ENCODE measurements at regions of chr18 and their contacts with region 1.

Region 1: GRCh38 chr18:63155169-63155852 is 164.3 kb downstream of the BCL2 start:
- DNase-seq: peak; percentile 79 to 92 (median 83)
- H3K4me3 ChIP-seq: peak overlapping the region; percentile 61 to 66
- H3K4me3 Mint-ChIP-seq: peak overlapping the region; percentile 83 to 93 (median 90)
- H3K27ac ChIP-seq: peak overlapping the region; percentile 97
- H3K27ac Mint-ChIP-seq: peak overlapping the region; percentile 93 to 100 (median 99)
- H3K4me1 ChIP-seq: peaks cover 100% of the 10 kb centered on the region
- H3K4me1 Mint-ChIP-seq: peaks cover 83 to 100% (median 93%) of the 10 kb centered on the region in 4 donors
- H3K27me3 ChIP-seq: no peaks in the 10 kb centered on the region
- H3K27me3 Mint-ChIP-seq: no peaks in the 10 kb centered on the region

Region 2: GRCh38 chr18:62522504-62523254 is 632.6 kb before region 1 on chr18 and contains the start of gene ZCCHC2:
- CTCF ChIA-PET with region 1: no interaction called
- POLR2A ChIA-PET with region 1: interaction called, 3 read pairs
- intact Hi-C with region 1: loop called (anchors 10 kb)
- DNase-seq: peak; percentile 97 to 100 (median 98)
- H3K4me3 ChIP-seq: peak within 1 kb of the TSS; percentile 38 to 98
- H3K4me3 Mint-ChIP-seq: peak within 1 kb of the TSS; percentile 90 to 99 (median 96)
- H3K27ac ChIP-seq: peak within 1 kb of the TSS; percentile 93
- H3K27ac Mint-ChIP-seq: peak within 1 kb of the TSS; percentile 80 to 96 (median 87)
- H3K4me1 ChIP-seq: peaks cover 34% of the 10 kb centered on the region
- H3K4me1 Mint-ChIP-seq: peaks cover 21 to 45% (median 32%) of the 10 kb centered on the region in 4 donors
- H3K27me3 ChIP-seq: no peaks in the 10 kb centered on the region
- H3K27me3 Mint-ChIP-seq: no peaks in the 10 kb centered on the region
- total RNA-seq, gene ZCCHC2: 51.7 to 52.2 TPM

Region 3: GRCh38 chr18:63138436-63139340 is 16.6 kb before region 1 on chr18:
- CTCF ChIA-PET with region 1: interaction called, 148 read pairs
- POLR2A ChIA-PET with region 1: interaction called, 54 read pairs
- intact Hi-C with region 1: loop called (anchors 1 kb)
- DNase-seq: no peak
- H3K4me3 ChIP-seq: peak overlapping the region; percentile 23 to 53
- H3K4me3 Mint-ChIP-seq: peak overlapping the region; percentile 82 to 92 (median 88)
- H3K27ac ChIP-seq: peak overlapping the region; percentile 32
- H3K27ac Mint-ChIP-seq: peak overlapping the region; percentile 76 to 96 (median 94)
- H3K4me1 ChIP-seq: peaks cover 70% of the 10 kb centered on the region
- H3K4me1 Mint-ChIP-seq: peaks cover 57 to 90% (median 73%) of the 10 kb centered on the region in 4 donors
- H3K27me3 ChIP-seq: no peaks in the 10 kb centered on the region
- H3K27me3 Mint-ChIP-seq: no peaks in the 10 kb centered on the region

Region 4: GRCh38 chr18:63199743-63200241 is 44.5 kb after region 1 on chr18:
- CTCF ChIA-PET with region 1: interaction called, 17 read pairs
- POLR2A ChIA-PET with region 1: interaction called, 25 read pairs
- intact Hi-C with region 1: loop called (anchors 1 kb)
- DNase-seq: peak; percentile 66 to 76 (median 71)
- H3K4me3 ChIP-seq: peak overlapping the region; percentile 64 to 65
- H3K4me3 Mint-ChIP-seq: no peak overlapping the region
- H3K27ac ChIP-seq: peak overlapping the region; percentile 59
- H3K27ac Mint-ChIP-seq: no peak overlapping the region
- H3K4me1 ChIP-seq: peaks cover 85% of the 10 kb centered on the region
- H3K4me1 Mint-ChIP-seq: peaks cover 28 to 37% (median 31%) of the 10 kb centered on the region in 4 donors
- H3K27me3 ChIP-seq: no peaks in the 10 kb centered on the region
- H3K27me3 Mint-ChIP-seq: no peaks in the 10 kb centered on the region

Region 5: GRCh38 chr18:63216516-63217311 is 61.4 kb after region 1 on chr18:
- CTCF ChIA-PET with region 1: interaction called, 16 read pairs
- POLR2A ChIA-PET with region 1: interaction called, 21 read pairs
- intact Hi-C with region 1: no loop called
- DNase-seq: peak; percentile 38 to 60 (median 50)
- H3K4me3 ChIP-seq: peak overlapping the region in 1 of 2 donors; percentile 21
- H3K4me3 Mint-ChIP-seq: peak overlapping the region; percentile 67 to 84 (median 78)
- H3K27ac ChIP-seq: peak overlapping the region; percentile 55
- H3K27ac Mint-ChIP-seq: peak overlapping the region; percentile 87 to 97 (median 91)
- H3K4me1 ChIP-seq: peaks cover 88% of the 10 kb centered on the region
- H3K4me1 Mint-ChIP-seq: peaks cover 71 to 100% (median 89%) of the 10 kb centered on the region in 4 donors
- H3K27me3 ChIP-seq: no peaks in the 10 kb centered on the region
- H3K27me3 Mint-ChIP-seq: no peaks in the 10 kb centered on the region

Region 6: GRCh38 chr18:63292831-63293683 is 137.7 kb after region 1 on chr18:
- CTCF ChIA-PET with region 1: interaction called, 23 read pairs
- POLR2A ChIA-PET with region 1: interaction called, 33 read pairs
- intact Hi-C with region 1: loop called (anchors 1 kb)
- DNase-seq: peak in 1 of 5 donors; percentile 59
- H3K4me3 ChIP-seq: peak overlapping the region in 1 of 2 donors; percentile 20
- H3K4me3 Mint-ChIP-seq: peak overlapping the region in 5 of 8 donors; percentile 28 to 86 (median 76)
- H3K27ac ChIP-seq: peak overlapping the region; percentile 27
- H3K27ac Mint-ChIP-seq: peak overlapping the region in 6 of 7 donors; percentile 65 to 90 (median 84)
- H3K4me1 ChIP-seq: peaks cover 82% of the 10 kb centered on the region
- H3K4me1 Mint-ChIP-seq: peaks cover 11 to 56% (median 40%) of the 10 kb centered on the region in 4 donors
- H3K27me3 ChIP-seq: no peaks in the 10 kb centered on the region
- H3K27me3 Mint-ChIP-seq: no peaks in the 10 kb centered on the region

Region 7: GRCh38 chr18:63311118-63312018 is 156.1 kb after region 1 on chr18:
- CTCF ChIA-PET with region 1: interaction called, 25 read pairs
- POLR2A ChIA-PET with region 1: interaction called, 195 read pairs
- intact Hi-C with region 1: no loop called
- DNase-seq: no peak
- H3K4me3 ChIP-seq: no peak overlapping the region
- H3K4me3 Mint-ChIP-seq: peak overlapping the region in 7 of 8 donors; percentile 26 to 92 (median 69)
- H3K27ac ChIP-seq: peak overlapping the region; percentile 14
- H3K27ac Mint-ChIP-seq: peak overlapping the region; percentile 51 to 94 (median 80)
- H3K4me1 ChIP-seq: peaks cover 96% of the 10 kb centered on the region
- H3K4me1 Mint-ChIP-seq: peaks cover 61 to 96% (median 82%) of the 10 kb centered on the region in 4 donors
- H3K27me3 ChIP-seq: no peaks in the 10 kb centered on the region
- H3K27me3 Mint-ChIP-seq: no peaks in the 10 kb centered on the region

Region 8: GRCh38 chr18:63762518-63762917 is 607.2 kb after region 1 on chr18:
- CTCF ChIA-PET with region 1: no interaction called
- POLR2A ChIA-PET with region 1: no interaction called
- intact Hi-C with region 1: no loop called
- DNase-seq: no peak
- H3K4me3 ChIP-seq: no peak overlapping the region
- H3K4me3 Mint-ChIP-seq: no peak overlapping the region
- H3K27ac ChIP-seq: no peak overlapping the region
- H3K27ac Mint-ChIP-seq: peak overlapping the region in 1 of 7 donors; percentile 4
- H3K4me1 ChIP-seq: no peaks in the 10 kb centered on the region
- H3K4me1 Mint-ChIP-seq: no peaks in the 10 kb centered on the region
- H3K27me3 ChIP-seq: no peaks in the 10 kb centered on the region
- H3K27me3 Mint-ChIP-seq: peaks cover 2 to 3% of the 10 kb centered on the region in 2 donors